HepG2 (cell line): ENCODE measurements at regions of chr18 and their contacts with region 1.

Region 1: DNA sequence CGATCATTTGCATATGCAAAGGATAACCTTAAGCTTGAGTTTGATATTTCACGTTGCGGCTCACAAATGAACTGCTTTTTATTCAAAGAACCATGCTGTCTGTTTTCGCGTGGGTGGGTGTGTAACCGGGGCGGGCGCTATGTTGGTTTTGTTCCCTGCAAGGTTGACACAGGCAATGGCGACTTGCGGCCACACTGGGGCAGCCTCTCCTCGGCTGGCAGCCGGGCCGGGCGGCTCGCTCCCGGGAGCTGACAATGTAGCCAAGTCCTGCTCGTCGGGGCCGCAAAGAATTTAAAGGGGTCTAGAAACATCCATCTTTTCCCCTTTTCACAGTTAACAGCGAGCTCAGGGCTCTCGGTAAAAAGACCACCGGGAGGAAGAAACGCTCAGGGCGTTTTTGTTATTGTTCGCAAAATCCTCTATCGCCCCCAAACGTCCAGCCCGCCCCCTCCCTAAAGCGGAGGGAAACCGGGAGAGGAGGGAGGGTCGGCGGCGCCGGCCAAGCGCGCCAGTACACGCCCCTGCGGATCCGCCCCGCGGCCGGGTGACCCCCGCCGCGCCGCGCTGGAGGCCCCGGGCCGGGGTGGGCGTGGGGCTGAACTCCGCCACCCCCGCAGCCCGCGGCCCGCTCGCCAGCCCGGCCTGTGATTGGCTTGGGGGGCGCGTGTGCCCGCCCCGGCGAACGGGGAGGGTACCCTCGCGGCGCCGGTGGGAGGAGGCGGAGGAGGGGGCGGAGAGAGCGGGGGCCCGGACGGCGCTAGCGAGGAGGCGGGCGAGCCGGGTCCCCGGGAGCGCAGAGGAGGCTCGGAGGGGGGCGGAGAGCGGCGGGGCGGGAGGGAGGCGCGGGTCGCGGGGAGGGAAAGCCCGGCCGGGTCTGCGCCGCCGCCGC is at the start of gene NEDD4L:
- DNase-seq: peak; percentile 82
- ATAC-seq: peak; percentile 87
- H3K4me3 ChIP-seq: peak within 1 kb of the TSS; percentile 87 to 96 (median 90)
- H3K27ac ChIP-seq: peak within 1 kb of the TSS; percentile 83
- H3K4me1 ChIP-seq: peaks cover 39% of the 10 kb centered on the region
- H3K27me3 ChIP-seq: no peaks in the 10 kb centered on the region; a peak in 1 of 5 replicates
- CTCF ChIP-seq: peak; percentile 94
- EP300 ChIP-seq: peak in 1 of 2 experiments; percentile 36; a peak in 2 of 4 replicates
- POLR2A ChIP-seq: peak in 1 of 2 experiments; percentile 22; a peak in 2 of 4 replicates
- RAD21 ChIP-seq: peak; percentile 94
- total RNA-seq, gene NEDD4L: 155 and 168 TPM in 2 replicates

Region 2: DNA sequence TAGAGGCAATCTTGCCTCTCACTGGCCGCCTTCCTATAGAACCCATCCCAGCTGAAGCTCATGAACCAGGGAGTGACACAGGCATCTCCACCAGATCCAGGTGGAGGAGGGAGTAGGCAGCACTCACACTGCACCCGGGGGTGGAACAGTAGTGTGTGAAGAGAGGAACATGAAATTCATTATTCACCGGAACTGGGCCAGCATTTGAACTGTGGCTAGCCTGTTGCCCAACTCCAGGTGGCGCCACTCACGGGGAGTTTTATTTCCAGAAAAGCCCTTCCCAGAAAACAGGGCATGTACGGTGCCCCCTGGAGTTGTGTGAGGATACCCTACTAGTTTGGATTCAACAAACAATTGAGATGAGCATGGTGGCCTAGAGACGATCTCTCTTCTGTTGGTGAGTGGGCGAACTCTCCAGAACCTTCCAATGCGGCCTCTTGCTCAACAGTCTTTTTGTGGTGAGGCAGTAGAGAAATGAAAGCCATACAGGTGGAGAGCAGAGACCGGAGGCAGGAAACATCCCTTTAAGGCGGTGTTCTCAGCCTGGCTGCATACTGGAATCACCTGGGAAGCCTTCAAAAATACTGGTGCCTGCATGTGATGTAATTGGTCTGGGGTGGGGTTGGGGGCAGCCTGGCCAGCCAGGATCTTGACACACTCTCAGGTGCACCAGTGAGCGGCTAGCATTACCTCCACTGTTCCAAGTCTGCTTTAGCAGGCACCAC is 73.2 kb before region 1 on chr18:
- CTCF ChIA-PET with region 1: no interaction called
- POLR2A ChIA-PET with region 1: no interaction called
- in situ Hi-C with region 1: no loop called
- intact Hi-C with region 1: loop called (anchors 5 kb)
- DNase-seq: peak; percentile 37
- ATAC-seq: peak; percentile 71
- H3K4me3 ChIP-seq: no peak overlapping the region
- H3K27ac ChIP-seq: no peak overlapping the region
- H3K4me1 ChIP-seq: peaks cover 43% of the 10 kb centered on the region
- H3K27me3 ChIP-seq: no peaks in the 10 kb centered on the region
- CTCF ChIP-seq: peak; percentile 61
- EP300 ChIP-seq: no peak
- POLR2A ChIP-seq: no peak
- RAD21 ChIP-seq: peak; percentile 45; the same call in 1 of the 2 replicates

Region 3: DNA sequence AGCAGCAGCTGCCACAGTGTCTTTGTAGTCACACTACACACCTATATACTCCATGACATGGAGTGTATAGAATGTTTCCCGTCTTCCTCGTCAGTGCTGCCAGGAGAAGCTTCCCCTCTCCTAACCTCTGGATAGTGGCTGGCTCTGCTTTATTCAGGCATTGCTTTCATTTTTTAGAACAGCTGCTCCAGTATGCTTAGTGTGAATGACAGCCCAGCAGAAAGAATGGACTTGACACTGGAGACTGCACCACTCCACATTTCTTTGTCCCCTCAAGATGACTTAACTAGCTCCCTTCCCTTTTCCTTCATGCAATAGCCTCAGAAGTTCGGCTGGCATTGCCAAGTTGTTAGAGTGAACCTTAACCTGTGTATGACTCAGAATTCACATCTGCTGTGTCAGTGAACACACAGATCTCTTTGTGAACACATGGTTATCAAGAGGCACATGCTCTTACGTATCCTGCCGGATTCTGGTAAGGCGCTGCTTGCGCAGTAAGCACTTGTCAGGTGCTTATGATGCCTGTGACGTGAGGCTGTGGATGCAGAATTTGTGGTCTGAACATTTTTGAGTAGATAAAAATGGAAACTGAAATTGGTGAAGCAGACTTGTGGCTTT is 74.2 kb after region 1 on chr18:
- CTCF ChIA-PET with region 1: interaction called, 22 read pairs
- POLR2A ChIA-PET with region 1: no interaction called
- in situ Hi-C with region 1: no loop called
- intact Hi-C with region 1: loop called (anchors 1 kb)
- DNase-seq: peak; percentile 69
- ATAC-seq: peak; percentile 71
- H3K4me3 ChIP-seq: no peak overlapping the region; a peak in 1 of 6 replicates
- H3K27ac ChIP-seq: peak overlapping the region; percentile 26
- H3K4me1 ChIP-seq: peaks cover 27% of the 10 kb centered on the region
- H3K27me3 ChIP-seq: no peaks in the 10 kb centered on the region
- CTCF ChIP-seq: no peak
- EP300 ChIP-seq: no peak
- POLR2A ChIP-seq: no peak
- RAD21 ChIP-seq: no peak

Region 4: GRCh38 chr18:58392324-58393000 is 348.7 kb after region 1 on chr18:
- CTCF ChIA-PET with region 1: no interaction called
- POLR2A ChIA-PET with region 1: interaction called, 3 read pairs
- in situ Hi-C with region 1: loop called (anchors 5 kb)
- intact Hi-C with region 1: no loop called
- DNase-seq: no peak
- ATAC-seq: no peak; the same call in 2 of the 3 replicates
- H3K4me3 ChIP-seq: no peak overlapping the region
- H3K27ac ChIP-seq: peak overlapping the region; percentile 53
- H3K4me1 ChIP-seq: peaks cover 86% of the 10 kb centered on the region
- H3K27me3 ChIP-seq: no peaks in the 10 kb centered on the region
- CTCF ChIP-seq: no peak
- EP300 ChIP-seq: no peak
- POLR2A ChIP-seq: peak in 1 of 2 experiments; percentile 11; a peak in 1 of 4 replicates
- RAD21 ChIP-seq: no peak

Region 5: DNA sequence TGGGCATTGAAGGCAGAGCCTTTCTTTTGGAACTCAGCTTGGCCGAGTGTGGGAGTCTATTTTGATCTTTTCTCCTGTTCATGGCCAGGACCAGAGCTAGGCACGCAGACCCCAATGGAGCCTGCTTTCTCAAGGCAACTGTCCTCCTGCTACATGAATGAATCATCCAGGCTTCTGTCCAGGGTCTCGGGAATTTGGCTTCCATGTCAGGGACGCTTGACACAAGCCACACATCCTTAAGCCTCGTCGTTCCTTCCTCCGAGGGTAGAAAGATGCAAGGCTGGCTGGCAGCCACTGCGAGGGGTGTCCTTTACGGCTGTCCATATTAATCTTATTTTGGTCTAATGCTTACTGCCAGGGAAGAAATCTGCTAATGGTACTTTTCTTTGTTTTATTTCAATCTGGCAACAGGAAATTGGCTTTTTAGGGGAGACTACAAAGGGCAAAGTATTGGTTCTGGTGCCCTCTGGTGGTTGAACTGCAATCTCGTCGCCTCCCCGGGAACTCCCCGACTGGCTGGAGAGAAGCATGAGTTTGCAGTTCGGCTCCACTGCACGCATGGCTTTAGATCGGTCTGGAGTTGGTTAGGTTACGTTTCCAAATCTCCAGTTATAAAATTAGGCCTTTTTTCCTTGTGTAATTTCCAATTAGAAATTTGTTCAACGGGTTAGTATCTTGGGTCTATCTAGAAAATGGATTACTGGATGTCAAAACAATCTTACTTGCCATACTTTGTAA is 449.9 kb after region 1 on chr18:
- CTCF ChIA-PET with region 1: interaction called, 4 read pairs
- POLR2A ChIA-PET with region 1: interaction called, 5 read pairs
- in situ Hi-C with region 1: no loop called
- intact Hi-C with region 1: loop called (anchors 1 kb)
- DNase-seq: peak; percentile 76
- ATAC-seq: peak; percentile 89
- H3K4me3 ChIP-seq: no peak overlapping the region
- H3K27ac ChIP-seq: peak overlapping the region; percentile 63
- H3K4me1 ChIP-seq: peaks cover 98% of the 10 kb centered on the region
- H3K27me3 ChIP-seq: no peaks in the 10 kb centered on the region
- CTCF ChIP-seq: peak; percentile 91
- EP300 ChIP-seq: peak in 1 of 2 experiments; percentile 47; a peak in 1 of 4 replicates
- POLR2A ChIP-seq: no peak
- RAD21 ChIP-seq: peak; percentile 94

Region 6: GRCh38 chr18:58768293-58768974 is 724.7 kb after region 1 on chr18:
- CTCF ChIA-PET with region 1: no interaction called
- POLR2A ChIA-PET with region 1: no interaction called
- in situ Hi-C with region 1: no loop called
- intact Hi-C with region 1: loop called (anchors 1 kb)
- DNase-seq: peak; percentile 35
- ATAC-seq: peak; percentile 98
- H3K4me3 ChIP-seq: peak overlapping the region; percentile 49 to 68 (median 49); a peak in 5 of 6 replicates
- H3K27ac ChIP-seq: no peak overlapping the region
- H3K4me1 ChIP-seq: peaks cover 52% of the 10 kb centered on the region
- H3K27me3 ChIP-seq: peaks cover 1 to 21% of the 10 kb centered on the region in 2 experiments; a peak in 2 of 5 replicates
- CTCF ChIP-seq: peak; percentile 97
- EP300 ChIP-seq: no peak
- POLR2A ChIP-seq: no peak
- RAD21 ChIP-seq: peak; percentile 86